A673 (cell line): ENCODE measurements at regions of chr19 and their contacts with region 1.

Region 1: DNA sequence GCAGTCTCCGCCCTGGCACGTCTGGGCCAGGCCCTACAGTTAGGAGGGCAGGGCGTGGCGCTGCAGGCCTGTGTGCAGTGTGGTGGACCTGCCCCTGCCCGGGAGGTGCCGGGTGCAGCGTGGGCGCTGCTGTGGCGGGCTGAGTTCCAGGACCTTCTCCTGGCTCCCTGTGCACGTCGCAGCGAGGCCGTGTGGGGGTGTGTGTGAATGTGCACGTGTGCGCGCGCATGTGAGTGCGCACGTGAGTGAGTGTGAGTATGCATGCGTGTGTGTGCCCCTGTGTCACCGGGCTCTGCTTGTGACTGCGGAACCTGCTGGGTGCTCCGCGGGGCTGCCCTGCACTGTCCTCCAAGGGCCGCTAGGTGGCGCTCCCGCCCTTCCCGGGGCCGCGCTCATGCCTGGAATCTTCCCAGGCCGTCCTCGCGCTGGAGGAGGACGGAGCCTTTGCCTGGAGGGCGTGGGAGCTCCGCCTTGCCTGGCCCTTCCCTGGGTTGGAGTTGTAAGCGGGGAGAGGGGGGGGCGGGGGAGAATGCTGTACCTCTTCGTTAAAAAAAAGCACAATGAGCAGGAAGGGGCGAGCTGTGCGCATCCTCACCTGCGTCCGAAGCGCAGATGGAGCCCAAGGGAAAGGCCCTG is 79.3 kb downstream of the KDM4B start:
- DNase-seq: peak; percentile 93
- H3K4me3 ChIP-seq: no peak overlapping the region
- H3K27ac ChIP-seq: peak overlapping the region; percentile 72
- H3K4me1 ChIP-seq: peaks cover 47% of the 10 kb centered on the region
- H3K27me3 ChIP-seq: no peaks in the 10 kb centered on the region
- CTCF ChIP-seq: peak; percentile 98

Region 2: DNA sequence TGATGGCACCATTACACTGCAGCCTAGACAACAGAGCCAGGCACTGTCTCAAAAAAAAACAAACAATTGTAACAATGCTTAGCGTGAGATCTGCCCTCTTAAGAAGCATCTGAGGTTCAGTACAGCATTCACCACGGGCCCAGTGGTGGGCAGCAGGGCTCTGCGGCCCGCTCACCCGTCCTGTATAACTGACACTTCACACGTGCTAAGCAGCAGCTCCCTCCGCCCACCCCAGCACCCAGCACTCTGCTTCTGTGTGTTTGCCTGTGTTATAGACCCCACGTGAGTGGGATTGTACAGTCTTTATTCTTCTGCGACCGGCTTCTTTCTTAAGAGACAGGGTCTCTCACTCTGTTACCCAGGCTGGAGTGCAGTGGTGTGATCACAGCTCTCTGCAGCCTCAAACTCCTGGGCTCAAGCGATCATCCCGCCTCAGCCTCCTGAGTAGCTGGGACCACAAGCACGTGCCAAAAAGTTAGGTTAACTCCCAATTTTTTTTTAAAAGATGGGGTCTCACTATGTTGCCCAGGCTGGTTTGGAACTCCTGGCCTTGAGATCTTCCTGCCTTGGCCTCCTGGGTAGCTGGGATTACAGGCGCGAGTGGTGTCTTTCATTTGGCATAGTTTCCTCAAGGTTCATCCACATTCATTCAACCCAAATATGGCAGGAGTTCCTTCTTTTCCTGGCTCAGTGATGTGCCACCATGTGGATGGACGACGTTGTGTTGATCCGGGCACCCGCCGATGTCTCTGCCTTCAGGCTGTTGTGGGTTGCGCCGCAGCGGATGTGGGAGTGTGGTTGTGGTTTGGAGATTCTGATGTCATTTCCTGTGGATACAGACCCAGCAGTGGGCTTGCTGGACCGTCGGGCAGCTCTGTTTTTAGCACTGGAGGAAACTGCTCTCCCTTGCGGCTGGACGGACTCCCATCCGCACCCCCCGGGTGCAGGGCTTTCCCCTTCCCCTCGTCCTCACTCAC is 90.7 kb after region 1 on chr19:
- CTCF ChIA-PET with region 1: interaction called, 10 read pairs
- POLR2A ChIA-PET with region 1: no interaction called
- intact Hi-C with region 1: loop called (anchors 5 kb)
- DNase-seq: peak; percentile 77
- H3K4me3 ChIP-seq: no peak overlapping the region
- H3K27ac ChIP-seq: peak overlapping the region; percentile 37
- H3K4me1 ChIP-seq: peaks cover 7% of the 10 kb centered on the region
- H3K27me3 ChIP-seq: no peaks in the 10 kb centered on the region
- CTCF ChIP-seq: 0 out of 2 replicates have a peak, but pooled peaks have one; percentile 13

Region 3: DNA sequence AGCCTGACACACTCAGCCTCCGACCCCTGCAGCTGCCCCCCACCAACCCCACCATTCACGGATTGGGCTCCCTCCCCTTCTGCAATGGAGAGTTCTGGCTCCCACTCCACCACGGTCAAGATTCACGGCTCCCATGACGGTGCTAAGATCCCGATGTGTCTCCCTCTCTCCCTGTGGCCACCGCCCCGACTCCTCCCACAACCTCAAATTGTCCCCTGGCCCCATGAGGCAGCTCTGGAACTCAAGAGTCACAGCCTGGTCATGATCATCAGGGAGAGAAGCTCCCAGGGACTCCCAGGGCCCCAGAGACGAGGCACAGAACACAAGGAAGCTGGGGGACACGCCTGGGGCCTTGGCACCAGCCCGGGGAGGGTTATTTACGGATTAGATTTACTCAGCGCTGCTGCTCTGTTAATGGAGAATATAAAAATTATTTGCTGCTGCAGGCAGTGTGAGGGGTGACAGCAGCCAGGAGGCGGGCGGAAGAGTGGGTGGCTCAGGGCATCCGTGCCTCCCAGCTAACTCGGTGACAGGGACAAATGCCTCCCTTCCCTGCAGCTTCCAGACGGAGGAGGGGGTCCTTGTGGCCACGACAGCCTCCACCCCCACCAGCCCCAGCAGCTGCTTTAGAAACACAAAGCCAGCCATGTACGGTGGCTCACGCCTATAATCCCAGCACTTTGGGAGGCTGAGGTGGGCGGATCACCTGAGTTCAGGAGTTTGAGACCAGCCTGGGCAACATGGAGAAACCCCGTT is 108.2 kb after region 1 on chr19:
- CTCF ChIA-PET with region 1: interaction called, 9 read pairs
- POLR2A ChIA-PET with region 1: no interaction called
- intact Hi-C with region 1: loop called (anchors 5 kb)
- DNase-seq: peak; percentile 28
- H3K4me3 ChIP-seq: no peak overlapping the region
- H3K27ac ChIP-seq: no peak overlapping the region
- H3K4me1 ChIP-seq: peaks cover 6% of the 10 kb centered on the region
- H3K27me3 ChIP-seq: no peaks in the 10 kb centered on the region
- CTCF ChIP-seq: no peak

Region 4: DNA sequence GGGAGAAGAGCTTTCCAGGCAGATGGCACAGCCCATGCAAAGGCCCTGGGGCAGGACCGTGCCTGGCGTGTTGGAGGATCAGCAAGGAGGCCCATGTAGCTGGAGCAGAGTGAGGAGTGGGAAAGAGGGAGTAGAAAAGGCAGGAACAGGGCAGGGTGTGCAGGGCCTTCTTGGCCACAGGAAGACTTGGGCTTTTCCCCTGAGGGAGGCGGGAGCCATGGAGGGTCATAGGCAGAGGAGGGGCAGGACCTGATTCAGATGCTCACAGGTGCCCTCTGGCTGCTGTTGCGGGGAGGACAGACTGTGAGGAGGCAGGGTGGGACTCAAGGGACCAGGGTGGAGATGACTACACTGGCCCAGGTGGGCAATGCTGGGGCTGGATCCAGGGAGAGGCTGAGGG is 306.2 kb after region 1 on chr19:
- CTCF ChIA-PET with region 1: no interaction called
- POLR2A ChIA-PET with region 1: no interaction called
- intact Hi-C with region 1: loop called (anchors 10 kb)
- DNase-seq: peak; percentile 48
- H3K4me3 ChIP-seq: no peak overlapping the region
- H3K27ac ChIP-seq: no peak overlapping the region
- H3K4me1 ChIP-seq: no peaks in the 10 kb centered on the region
- H3K27me3 ChIP-seq: no peaks in the 10 kb centered on the region
- CTCF ChIP-seq: peak; percentile 46

Region 5: GRCh38 chr19:5376928-5377327 is 328.7 kb after region 1 on chr19:
- CTCF ChIA-PET with region 1: interaction called, 8 read pairs
- POLR2A ChIA-PET with region 1: no interaction called
- intact Hi-C with region 1: loop called (anchors 2 kb)
- DNase-seq: no peak
- H3K4me3 ChIP-seq: no peak overlapping the region
- H3K27ac ChIP-seq: no peak overlapping the region
- H3K4me1 ChIP-seq: no peaks in the 10 kb centered on the region
- H3K27me3 ChIP-seq: no peaks in the 10 kb centered on the region
- CTCF ChIP-seq: no peak

Region 6: GRCh38 chr19:5585461-5586299 is 537.5 kb after region 1 on chr19:
- CTCF ChIA-PET with region 1: interaction called, 11 read pairs
- POLR2A ChIA-PET with region 1: no interaction called
- intact Hi-C with region 1: no loop called
- DNase-seq: peak; percentile 84
- H3K4me3 ChIP-seq: no peak overlapping the region
- H3K27ac ChIP-seq: peak overlapping the region; percentile 72
- H3K4me1 ChIP-seq: peaks cover 23% of the 10 kb centered on the region
- H3K27me3 ChIP-seq: no peaks in the 10 kb centered on the region
- CTCF ChIP-seq: no peak